ENCODE measurements at regions of chr7 and their contacts with region 1.

Region 1: GRCh38 chr7:74002474-74003017 is 25.4 kb upstream of the ELN start:
- DNase-seq: peak; percentile 68
- H3K4me3 ChIP-seq: no peak overlapping the region
- H3K27ac ChIP-seq: peak overlapping the region; percentile 87
- H3K27me3 ChIP-seq: no peaks in the 10 kb centered on the region
- CTCF ChIP-seq: no peak

Region 2: DNA sequence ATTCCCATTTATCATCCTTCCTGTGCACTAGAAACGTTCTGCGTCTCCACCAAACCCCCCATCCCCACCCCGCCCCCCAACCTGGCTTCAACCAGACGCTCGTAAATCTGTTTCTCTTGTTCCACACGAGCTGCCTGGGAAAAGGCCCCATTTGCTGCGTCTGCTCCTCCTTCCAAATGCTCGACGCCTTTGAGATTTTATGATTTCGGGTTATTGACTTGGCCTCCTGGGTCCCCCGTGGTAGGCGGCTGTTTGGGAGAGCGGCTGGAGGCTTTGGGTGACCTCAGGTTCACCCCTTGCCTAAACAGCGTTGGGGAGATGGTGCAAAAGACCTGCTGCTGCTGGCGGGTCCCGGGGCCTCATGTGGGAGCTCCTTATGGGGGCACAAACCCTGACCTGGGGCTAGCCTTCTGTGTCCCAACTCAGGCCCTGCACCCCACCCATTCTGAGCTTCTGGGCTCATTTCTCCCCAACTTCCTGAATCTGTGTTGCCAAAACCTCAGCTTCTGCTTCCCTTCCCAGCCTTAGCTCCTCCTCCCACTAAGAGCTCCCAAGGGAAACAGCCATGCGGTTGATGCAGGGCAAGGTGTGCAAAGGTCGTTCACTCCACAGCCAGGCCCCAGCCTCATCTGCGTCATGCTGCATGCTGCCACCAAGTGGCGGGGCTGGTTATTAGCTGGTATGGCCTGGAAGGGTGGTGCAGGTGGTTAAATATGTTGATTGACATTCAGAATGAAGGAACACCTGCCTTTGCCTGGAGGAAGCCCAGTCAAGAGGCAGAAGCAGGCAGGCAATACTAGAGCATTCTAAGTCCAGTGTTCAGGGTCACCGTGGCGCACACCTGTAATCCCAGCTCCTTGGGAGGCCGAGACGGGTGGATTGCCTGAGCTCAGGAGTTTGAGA is 23.6 kb before region 1 on chr7:
- CTCF ChIA-PET with region 1: no interaction called
- POLR2A ChIA-PET with region 1: no interaction called
- DNase-seq: no peak
- H3K4me3 ChIP-seq: no peak overlapping the region
- H3K27ac ChIP-seq: no peak overlapping the region
- H3K27me3 ChIP-seq: peaks cover 10% of the 10 kb centered on the region
- CTCF ChIP-seq: peak; percentile 37

Region 3: GRCh38 chr7:74032191-74032490 is 29.6 kb after region 1 on chr7:
- CTCF ChIA-PET with region 1: interaction called, 12 read pairs
- POLR2A ChIA-PET with region 1: interaction called, 10 read pairs
- DNase-seq: no peak
- H3K4me3 ChIP-seq: no peak overlapping the region
- H3K27ac ChIP-seq: no peak overlapping the region
- H3K27me3 ChIP-seq: peaks cover 15% of the 10 kb centered on the region
- CTCF ChIP-seq: no peak

Region 4: DNA sequence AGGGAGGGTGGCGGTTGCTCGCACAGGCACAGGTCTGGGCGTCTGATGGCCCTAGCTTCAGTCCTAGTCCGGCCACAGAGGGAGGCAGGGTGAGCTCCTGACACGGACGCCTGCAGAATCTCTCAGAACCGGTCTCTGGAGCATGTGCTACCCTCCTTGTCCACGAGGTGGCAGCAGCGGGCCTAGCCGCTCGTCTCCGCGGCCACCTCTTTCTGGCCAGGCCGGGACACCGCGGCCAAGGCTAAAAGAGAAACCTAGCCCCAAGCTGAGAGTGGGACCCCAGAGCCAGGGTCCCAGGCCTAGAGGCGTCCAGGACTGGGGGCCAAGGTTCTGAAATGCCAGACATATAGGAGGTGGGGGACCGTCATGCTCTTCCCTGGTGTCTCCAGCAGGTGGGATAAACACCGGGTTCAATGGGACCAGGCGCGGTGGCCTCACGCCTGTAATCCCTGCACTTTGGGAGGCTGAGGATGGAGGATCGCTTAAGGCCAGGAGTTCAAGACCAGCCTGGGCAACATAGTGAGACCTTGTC is 204.1 kb after region 1 on chr7:
- CTCF ChIA-PET with region 1: no interaction called
- POLR2A ChIA-PET with region 1: no interaction called
- DNase-seq: peak; percentile 21
- H3K4me3 ChIP-seq: 0 out of 2 replicates have a peak overlapping the region, but pooled peaks have one; percentile 25
- H3K27ac ChIP-seq: no peak overlapping the region
- H3K27me3 ChIP-seq: no peaks in the 10 kb centered on the region
- CTCF ChIP-seq: peak; percentile 92

Region 5: GRCh38 chr7:74365322-74366022 is 362.9 kb after region 1 on chr7:
- CTCF ChIA-PET with region 1: no interaction called
- POLR2A ChIA-PET with region 1: interaction called, 11 read pairs
- DNase-seq: no peak
- H3K4me3 ChIP-seq: no peak overlapping the region
- H3K27ac ChIP-seq: no peak overlapping the region
- H3K27me3 ChIP-seq: no peaks in the 10 kb centered on the region
- CTCF ChIP-seq: no peak

Measured in AG04450 (cell line).